AG04449 (cell line): ENCODE measurements at regions of chr1 and their contacts with region 1.

Region 1: GRCh38 chr1:17274186-17275170 is 25.6 kb downstream of the PADI3 start:
- DNase-seq: no peak
- H3K4me3 ChIP-seq: no peak overlapping the region
- CTCF ChIP-seq: peak; percentile 81

Region 2: DNA sequence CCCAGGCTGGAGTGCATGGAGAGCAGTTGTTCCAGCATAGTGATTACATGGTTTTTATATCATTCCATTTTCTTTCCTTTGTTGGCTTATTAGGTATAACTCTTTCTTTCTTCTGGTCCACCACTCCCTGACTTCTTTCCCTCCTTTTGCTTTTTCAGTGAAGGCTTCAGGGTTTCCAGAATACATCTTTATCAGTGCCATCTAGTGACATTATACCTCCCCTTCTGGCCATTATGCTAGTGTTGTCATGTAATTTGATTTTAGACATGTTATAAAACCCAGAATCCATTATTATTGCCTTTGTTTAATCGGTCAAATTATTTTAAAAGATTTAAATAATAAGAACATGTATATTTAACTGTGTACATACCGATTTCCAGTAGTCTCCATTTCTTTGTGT is 771.0 kb before region 1 on chr1:
- CTCF ChIA-PET with region 1: no interaction called
- POLR2A ChIA-PET with region 1: no interaction called
- DNase-seq: no peak
- H3K4me3 ChIP-seq: no peak overlapping the region
- CTCF ChIP-seq: no peak

Region 3: GRCh38 chr1:17250601-17251000 is 23.9 kb before region 1 on chr1:
- CTCF ChIA-PET with region 1: interaction called, 10 read pairs
- POLR2A ChIA-PET with region 1: no interaction called
- DNase-seq: no peak
- H3K4me3 ChIP-seq: no peak overlapping the region
- CTCF ChIP-seq: no peak

Region 4: DNA sequence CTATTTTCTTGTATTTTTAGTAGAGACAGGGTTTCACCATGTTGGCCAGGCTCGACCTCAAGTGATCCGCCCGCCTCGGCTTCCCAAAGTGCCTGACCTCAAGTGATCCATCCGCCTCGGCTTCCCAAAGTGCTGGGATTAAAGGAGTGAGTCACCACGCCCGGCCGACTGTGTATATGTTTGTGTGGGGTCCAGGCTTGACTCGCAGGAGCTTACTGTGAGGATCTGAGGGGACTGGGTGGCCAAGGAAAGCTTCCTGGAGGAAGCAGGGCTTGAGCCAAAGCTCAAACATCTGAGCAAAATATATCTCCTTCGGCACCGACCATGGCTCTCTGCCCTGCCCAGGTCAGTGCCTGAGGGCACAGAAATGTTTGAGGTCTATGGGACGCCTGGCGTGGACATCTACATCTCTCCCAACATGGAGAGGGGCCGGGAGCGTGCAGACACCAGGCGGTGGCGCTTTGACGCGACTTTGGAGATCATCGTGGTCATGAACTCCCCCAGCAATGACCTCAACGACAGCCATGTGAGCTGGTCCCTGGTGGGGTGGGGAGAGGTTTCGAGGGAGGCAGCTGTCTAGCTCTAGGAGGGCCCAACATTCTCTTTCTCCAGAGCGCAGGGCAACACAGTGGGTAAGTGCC is 15.1 kb before region 1 on chr1:
- CTCF ChIA-PET with region 1: interaction called, 100 read pairs
- POLR2A ChIA-PET with region 1: no interaction called
- DNase-seq: no peak
- H3K4me3 ChIP-seq: no peak overlapping the region
- CTCF ChIP-seq: no peak

Region 5: DNA sequence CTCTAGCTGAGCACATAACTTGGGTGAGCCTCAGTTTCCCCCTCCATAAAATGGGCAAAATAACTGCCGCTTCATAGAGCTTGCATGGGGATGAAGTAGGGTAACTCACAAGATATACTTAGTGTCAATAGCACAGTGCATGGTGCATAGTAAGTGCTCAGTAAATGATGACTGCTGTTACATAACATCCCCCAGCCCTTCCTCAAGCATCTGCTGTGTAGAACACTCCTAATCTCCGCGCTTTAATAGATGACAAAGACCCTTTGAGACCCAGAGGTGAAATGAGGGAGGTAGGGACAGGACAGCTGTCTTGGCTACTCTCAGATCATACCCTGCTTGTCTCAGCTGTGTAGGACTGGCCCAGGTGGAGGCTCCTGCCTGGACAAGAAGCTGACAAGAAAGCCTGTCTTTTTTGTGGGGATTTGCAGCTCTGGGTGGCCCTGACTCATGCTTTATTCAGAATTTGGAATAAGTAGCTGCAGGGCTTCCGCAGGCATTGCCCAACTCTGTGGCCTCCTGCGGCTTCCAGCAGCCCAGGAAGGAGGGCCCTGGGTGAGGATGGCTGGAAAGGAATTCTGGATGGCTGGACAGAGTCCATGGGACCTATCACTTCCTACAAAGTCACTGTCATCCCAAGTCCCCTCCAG is 12.8 kb after region 1 on chr1:
- CTCF ChIA-PET with region 1: interaction called, 37 read pairs
- POLR2A ChIA-PET with region 1: no interaction called
- DNase-seq: peak; percentile 50
- H3K4me3 ChIP-seq: no peak overlapping the region
- CTCF ChIP-seq: no peak

Region 6: DNA sequence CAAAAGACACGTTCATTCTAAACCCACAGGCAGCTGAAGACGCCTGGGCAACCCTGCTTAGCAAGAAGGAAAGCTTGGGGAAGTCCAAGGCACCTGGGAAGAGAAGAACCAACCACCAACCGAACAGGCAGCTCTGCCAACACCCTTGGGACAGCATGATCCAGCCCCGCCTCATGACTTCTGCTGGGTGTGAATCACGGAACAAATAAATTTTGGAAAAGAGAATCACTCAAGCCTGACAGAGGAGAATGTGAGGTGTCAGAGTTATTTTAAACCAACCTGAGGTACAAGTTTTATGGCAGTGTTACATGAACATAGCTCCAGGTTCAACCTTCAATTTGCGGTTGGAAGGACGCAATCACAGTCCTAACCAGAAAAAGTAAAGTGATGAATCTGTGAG is 23.5 kb after region 1 on chr1:
- CTCF ChIA-PET with region 1: no interaction called
- POLR2A ChIA-PET with region 1: no interaction called
- DNase-seq: no peak
- H3K4me3 ChIP-seq: no peak overlapping the region
- CTCF ChIP-seq: no peak